ENCODE measurements at regions of chr14 and their contacts with region 1.

Region 1: DNA sequence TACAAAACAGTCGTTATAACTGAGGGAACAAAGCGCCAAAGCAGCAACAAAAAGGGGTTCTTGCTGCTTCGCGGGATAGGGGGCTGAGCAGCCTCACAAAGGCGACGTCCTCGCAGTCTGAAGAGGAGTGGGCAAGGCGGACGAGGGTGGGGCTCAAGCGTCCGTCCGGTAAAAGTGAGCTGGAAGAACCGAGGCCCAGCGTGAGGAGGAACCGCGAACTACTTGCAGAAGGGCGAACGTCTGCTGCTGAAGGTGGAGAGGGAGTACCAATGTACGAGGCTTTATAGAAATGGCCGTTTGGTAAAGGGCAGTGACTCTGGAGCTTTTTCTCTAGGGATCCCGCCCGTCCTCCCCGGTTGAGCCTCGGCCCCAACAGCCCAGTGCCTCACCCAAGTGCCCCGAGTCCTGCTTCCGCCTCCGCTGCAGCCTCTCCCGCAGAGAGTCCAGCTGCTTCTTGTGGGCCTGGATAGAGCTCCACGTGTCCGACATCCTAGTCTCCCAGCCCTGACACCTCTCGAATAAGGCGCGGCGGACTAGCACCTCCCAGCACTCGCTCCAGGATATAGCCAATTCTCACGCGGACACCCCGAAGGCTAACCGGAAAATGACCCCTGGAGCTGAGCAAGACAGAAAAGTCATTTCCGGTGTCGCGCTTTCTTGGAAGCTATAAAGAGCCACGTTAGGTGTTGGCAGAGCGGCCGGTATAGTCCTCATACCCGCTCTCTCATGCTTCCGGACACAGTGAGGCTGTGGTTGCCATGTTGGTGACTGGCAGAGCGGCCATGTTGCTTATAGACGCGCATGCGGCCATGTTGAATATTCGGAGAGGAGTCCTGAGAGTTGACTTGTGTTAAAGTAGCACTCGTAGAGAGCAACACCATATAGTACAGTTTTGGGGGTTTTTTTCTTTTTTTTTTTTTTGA is at the start of gene METTL3:
- DNase-seq: peak; percentile 95
- ATAC-seq: peak; percentile 99
- H3K4me3 ChIP-seq: peak within 1 kb of the TSS; percentile 76 to 99 (median 96)
- H3K4me3 Mint-ChIP-seq: peak within 1 kb of the TSS; percentile 100
- H3K27ac ChIP-seq: peak within 1 kb of the TSS; percentile 81 to 90
- H3K27ac Mint-ChIP-seq: peak within 1 kb of the TSS; percentile 97
- H3K4me1 ChIP-seq: peaks cover 14 to 22% of the 10 kb centered on the region in 2 donors
- H3K4me1 Mint-ChIP-seq: peaks cover 40% of the 10 kb centered on the region
- H3K27me3 ChIP-seq: no peaks in the 10 kb centered on the region
- H3K27me3 Mint-ChIP-seq: peaks cover 4% of the 10 kb centered on the region
- CTCF ChIP-seq: no peak
- total RNA-seq, gene METTL3: 118 and 124 TPM in 2 replicates

Region 2: GRCh38 chr14:21269252-21270046 is 241.5 kb before region 1 on chr14 and contains the start of gene HNRNPC:
- CTCF ChIA-PET with region 1: no interaction called
- POLR2A ChIA-PET with region 1: no interaction called
- intact Hi-C with region 1: loop called (anchors 1 kb)
- DNase-seq: peak; percentile 100
- ATAC-seq: peak; percentile 83
- H3K4me3 ChIP-seq: peak within 1 kb of the TSS; percentile 67 to 100 (median 99)
- H3K4me3 Mint-ChIP-seq: peak within 1 kb of the TSS; percentile 98
- H3K27ac ChIP-seq: peak within 1 kb of the TSS; percentile 91 to 92
- H3K27ac Mint-ChIP-seq: peak within 1 kb of the TSS; percentile 99
- H3K4me1 ChIP-seq: peaks cover 37 to 48% of the 10 kb centered on the region in 2 donors
- H3K4me1 Mint-ChIP-seq: peaks cover 40% of the 10 kb centered on the region
- H3K27me3 ChIP-seq: no peaks in the 10 kb centered on the region
- H3K27me3 Mint-ChIP-seq: no peaks in the 10 kb centered on the region
- CTCF ChIP-seq: no peak
- total RNA-seq, gene HNRNPC: 496 and 497 TPM in 2 replicates

Region 3: DNA sequence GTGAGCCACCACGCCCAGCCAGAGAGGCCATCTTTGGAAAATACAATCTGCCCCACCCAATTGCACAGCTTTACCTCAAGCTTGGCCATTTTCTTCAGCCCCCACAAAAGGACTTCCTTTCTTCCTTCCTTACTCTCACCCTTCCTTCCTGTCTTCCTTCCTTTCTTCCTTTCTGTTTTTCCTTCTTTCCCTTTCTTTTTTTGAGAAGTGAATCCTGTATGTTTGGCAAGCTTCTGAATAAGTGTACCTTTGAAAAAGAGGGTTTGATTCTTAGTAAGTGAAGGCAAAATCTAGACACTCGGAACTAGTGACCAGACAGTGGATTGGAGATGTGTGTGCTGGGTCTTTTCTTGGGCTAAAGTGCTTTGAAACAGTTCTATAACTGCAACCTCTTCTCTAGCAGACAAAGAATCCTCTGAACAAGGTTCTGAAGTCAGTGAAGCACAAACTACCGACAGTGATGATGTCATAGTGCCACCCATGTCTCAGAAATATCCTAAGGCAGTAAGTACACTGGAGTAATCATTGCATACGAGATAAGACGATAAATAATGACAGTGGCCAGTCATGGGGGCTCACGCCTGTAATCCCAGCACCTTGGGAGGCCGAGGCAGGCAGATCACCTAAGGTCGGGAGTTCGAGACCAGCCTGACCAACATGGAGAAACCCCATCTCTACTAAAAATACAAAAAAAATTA is 176.6 kb before region 1 on chr14:
- CTCF ChIA-PET with region 1: no interaction called
- POLR2A ChIA-PET with region 1: no interaction called
- intact Hi-C with region 1: no loop called
- DNase-seq: no peak
- ATAC-seq: no peak
- H3K4me3 ChIP-seq: no peak overlapping the region
- H3K4me3 Mint-ChIP-seq: no peak overlapping the region
- H3K27ac ChIP-seq: no peak overlapping the region
- H3K27ac Mint-ChIP-seq: no peak overlapping the region
- H3K4me1 ChIP-seq: no peaks in the 10 kb centered on the region
- H3K4me1 Mint-ChIP-seq: no peaks in the 10 kb centered on the region
- H3K27me3 ChIP-seq: no peaks in the 10 kb centered on the region
- H3K27me3 Mint-ChIP-seq: no peaks in the 10 kb centered on the region
- CTCF ChIP-seq: no peak

Region 4: GRCh38 chr14:21455911-21456667 is 54.9 kb before region 1 on chr14 and contains the start of gene CHD8:
- CTCF ChIA-PET with region 1: interaction called, 11 read pairs
- POLR2A ChIA-PET with region 1: interaction called, 7 read pairs
- intact Hi-C with region 1: loop called (anchors 1 kb)
- DNase-seq: peak; percentile 100
- ATAC-seq: peak; percentile 98
- H3K4me3 ChIP-seq: peak within 1 kb of the TSS; percentile 69 to 98 (median 94)
- H3K4me3 Mint-ChIP-seq: peak within 1 kb of the TSS; percentile 100
- H3K27ac ChIP-seq: peak within 1 kb of the TSS; percentile 89 to 93
- H3K27ac Mint-ChIP-seq: peak within 1 kb of the TSS; percentile 100
- H3K4me1 ChIP-seq: peaks cover 11 to 17% of the 10 kb centered on the region in 2 donors
- H3K4me1 Mint-ChIP-seq: peaks cover 36% of the 10 kb centered on the region
- H3K27me3 ChIP-seq: no peaks in the 10 kb centered on the region
- H3K27me3 Mint-ChIP-seq: no peaks in the 10 kb centered on the region
- CTCF ChIP-seq: peak; percentile 74
- total RNA-seq, gene CHD8: 155 and 157 TPM in 2 replicates

Region 5: DNA sequence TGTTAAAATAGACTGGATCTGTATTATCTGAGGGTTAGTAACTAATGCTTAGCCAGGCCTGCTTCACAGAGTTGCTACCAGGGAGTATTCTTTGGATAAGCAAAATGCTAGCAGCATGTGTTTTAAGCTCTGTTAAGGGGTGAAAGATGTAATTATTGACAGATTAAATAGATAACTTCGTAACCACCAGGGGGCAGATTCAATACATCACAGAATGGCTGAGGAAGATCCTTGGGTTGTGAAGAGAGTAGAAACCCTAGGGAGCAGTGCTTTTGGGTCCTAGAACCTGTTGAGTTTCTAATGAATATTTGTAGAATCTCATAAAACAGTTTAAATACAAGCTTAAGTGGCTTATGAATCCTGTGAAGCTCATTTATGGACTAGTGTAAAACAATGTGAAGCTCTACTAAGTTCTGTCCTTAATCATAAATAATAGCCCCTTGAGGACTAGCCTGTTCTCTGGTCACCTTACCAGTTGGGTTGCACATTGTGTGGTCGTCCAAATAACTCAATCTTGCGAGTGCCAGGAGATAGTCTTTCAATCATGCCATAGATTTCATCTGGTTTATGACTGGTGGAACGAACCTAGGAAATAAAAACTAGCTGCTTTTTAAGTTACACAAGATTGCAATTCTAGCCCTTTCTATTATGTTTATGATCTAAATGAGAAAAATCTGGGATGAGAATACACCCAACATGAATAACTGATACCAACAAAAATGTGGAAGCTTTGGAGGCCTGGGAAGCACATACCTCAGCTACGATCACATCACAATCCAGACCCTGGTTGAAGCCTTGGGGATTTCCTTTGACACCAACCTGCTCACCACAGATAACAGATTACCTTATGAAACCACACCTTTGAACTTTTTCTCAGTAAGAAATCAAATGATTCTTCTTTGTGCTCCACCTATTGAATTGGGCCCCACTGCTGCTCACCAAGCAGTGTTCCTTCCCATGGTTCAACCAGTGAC is 12.2 kb before region 1 on chr14:
- CTCF ChIA-PET with region 1: interaction called, 29 read pairs
- POLR2A ChIA-PET with region 1: interaction called, 5 read pairs
- intact Hi-C with region 1: no loop called
- DNase-seq: peak; percentile 61
- ATAC-seq: peak; percentile 36
- H3K4me3 ChIP-seq: no peak overlapping the region
- H3K4me3 Mint-ChIP-seq: no peak overlapping the region
- H3K27ac ChIP-seq: no peak overlapping the region
- H3K27ac Mint-ChIP-seq: no peak overlapping the region
- H3K4me1 ChIP-seq: no peaks in the 10 kb centered on the region
- H3K4me1 Mint-ChIP-seq: no peaks in the 10 kb centered on the region
- H3K27me3 ChIP-seq: no peaks in the 10 kb centered on the region
- H3K27me3 Mint-ChIP-seq: no peaks in the 10 kb centered on the region
- CTCF ChIP-seq: peak; percentile 72

Region 6: DNA sequence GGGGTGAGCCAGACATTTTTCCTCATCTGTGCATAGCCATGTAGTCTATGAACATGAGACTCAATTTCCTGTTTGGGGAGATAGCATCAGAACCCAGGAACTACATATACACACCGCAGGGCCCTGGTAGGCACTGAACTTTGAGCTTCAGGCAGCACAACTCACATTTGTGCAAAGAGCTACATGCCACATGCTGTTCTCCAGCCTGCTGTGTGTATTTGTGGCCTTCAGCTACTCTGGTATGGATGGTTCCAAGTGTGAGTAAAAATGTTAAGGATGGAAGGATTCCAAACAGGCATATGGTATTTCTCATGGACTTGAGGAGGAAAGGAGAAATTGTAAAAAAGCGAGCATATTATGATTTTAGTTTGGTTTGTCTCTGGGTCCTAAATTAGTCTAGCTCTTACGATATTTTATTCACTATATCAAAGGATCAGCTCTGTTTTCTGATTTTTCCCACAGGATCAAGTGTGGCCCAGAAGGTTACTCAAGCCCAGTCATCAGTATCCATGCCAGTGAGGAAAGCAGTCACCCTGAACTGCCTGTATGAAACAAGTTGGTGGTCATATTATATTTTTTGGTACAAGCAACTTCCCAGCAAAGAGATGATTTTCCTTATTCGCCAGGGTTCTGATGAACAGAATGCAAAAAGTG is 585.0 kb after region 1 on chr14:
- CTCF ChIA-PET with region 1: no interaction called
- POLR2A ChIA-PET with region 1: no interaction called
- intact Hi-C with region 1: no loop called
- DNase-seq: no peak
- ATAC-seq: no peak
- H3K4me3 ChIP-seq: no peak overlapping the region
- H3K4me3 Mint-ChIP-seq: no peak overlapping the region
- H3K27ac ChIP-seq: no peak overlapping the region
- H3K27ac Mint-ChIP-seq: no peak overlapping the region
- H3K4me1 ChIP-seq: no peaks in the 10 kb centered on the region
- H3K4me1 Mint-ChIP-seq: peaks cover 3% of the 10 kb centered on the region
- H3K27me3 ChIP-seq: peaks cover 0 to 20% (median 10%) of the 10 kb centered on the region in 4 experiments
- H3K27me3 Mint-ChIP-seq: peaks cover 30% of the 10 kb centered on the region
- CTCF ChIP-seq: no peak

Measured in B cell (primary cell).